Head of caudate nucleus (tissue), 42 donors: ENCODE measurements at regions of chr13 and their contacts with region 1.

Region 1: GRCh38 chr13:35818633-35819067 is 312.5 kb downstream of the DCLK1 start:
- DNase-seq: no peak

Region 2: DNA sequence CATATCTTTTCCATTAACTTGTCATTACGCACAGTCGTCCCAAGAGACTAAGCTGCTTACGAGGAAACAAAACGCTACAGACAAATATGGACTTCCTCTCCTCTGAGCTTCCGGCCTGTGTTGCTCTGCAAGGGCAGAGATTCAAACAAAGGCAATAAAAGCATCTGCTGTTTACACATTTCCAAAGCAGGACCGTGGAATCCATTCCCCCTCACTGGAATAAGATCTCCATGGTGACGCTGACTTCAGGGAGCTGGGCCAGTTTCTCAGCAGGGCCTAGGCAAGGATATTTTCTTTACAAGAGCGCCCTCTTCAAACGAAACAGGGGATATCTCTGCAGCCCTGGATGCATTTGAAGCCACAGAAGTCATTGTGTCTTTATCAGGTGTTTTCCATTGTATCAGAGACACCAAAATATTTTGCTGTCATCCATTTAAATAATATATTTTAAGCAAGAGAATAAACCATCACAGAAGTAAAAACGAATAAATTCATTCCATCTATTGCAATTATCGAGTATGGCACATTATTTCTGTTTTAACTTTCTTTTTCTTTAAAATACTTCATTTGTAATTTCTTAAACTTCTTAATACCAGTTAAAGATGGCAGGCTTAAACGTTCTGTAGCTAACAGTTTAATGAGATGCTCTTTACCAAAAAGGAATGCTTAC is 135.0 kb after region 1 on chr13:
- intact Hi-C with region 1: loop called (anchors 10 kb)
- DNase-seq: peak; percentile 63 to 92 (median 83)

Region 3: DNA sequence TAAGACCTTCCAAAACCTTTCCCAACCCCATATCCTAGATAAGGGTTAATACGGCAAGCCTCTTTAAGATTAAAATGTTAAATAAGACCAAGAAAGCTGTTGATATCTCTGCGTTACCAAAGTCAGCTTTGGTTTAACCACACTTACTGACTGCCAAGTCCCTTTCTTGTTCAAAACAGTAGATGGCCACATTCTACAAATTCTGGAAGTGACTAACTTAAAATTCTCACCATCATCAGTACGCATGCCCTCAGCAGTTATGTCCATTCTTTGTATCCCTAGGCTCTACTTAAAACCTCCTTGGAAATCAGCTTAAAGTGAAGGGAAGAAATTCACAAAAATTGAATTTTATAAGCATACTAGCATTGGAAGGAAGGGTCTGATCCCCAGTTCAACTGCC is 372.1 kb after region 1 on chr13:
- intact Hi-C with region 1: no loop called
- DNase-seq: no peak